ENCODE measurements at regions of chr20 and their contacts with region 1.

Region 1: DNA sequence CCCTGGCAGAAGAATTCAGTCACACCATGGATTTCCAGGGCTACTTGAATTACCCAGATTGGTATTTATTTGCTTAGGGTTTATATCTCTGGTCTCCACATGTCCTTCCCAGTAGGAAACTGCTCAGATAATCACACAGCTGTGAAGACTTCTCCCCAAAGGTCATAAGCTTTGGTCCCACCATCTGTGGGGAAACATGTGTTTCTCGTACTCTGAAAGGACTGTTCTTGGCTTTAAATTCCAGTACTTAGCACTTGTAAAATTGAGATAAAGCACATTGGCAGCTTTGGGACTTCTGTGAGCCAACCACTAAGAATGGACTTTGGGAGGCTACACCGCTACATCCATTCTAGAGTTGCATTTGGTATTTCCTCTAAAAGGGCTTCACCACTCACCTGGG is 205.3 kb upstream of the FOXA2 start:
- DNase-seq: no peak
- H3K4me3 Mint-ChIP-seq: no peak overlapping the region
- H3K27ac Mint-ChIP-seq: no peak overlapping the region
- H3K4me1 Mint-ChIP-seq: no peaks in the 10 kb centered on the region
- H3K27me3 Mint-ChIP-seq: no peaks in the 10 kb centered on the region

Region 2: DNA sequence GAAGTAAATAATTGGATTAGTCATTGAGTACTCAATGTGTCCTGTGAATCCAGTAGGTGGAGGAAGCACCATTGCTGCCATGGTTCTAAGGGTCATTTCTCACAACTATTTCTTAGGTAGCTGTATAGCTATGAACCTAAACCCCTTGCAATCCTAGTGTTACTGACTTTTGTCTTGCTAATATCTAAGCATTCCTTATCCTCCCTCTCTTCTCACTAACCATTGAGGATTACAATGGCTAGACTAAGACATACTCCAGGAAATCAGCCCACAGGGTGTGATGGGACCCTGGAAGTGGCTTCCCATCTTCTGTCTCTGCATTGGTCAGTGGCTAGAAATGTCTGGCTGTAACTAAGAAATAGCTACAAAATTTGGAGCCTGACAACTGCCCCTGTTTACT is 178.0 kb before region 1 on chr20:
- intact Hi-C with region 1: no loop called
- DNase-seq: no peak
- H3K4me3 Mint-ChIP-seq: no peak overlapping the region
- H3K27ac Mint-ChIP-seq: no peak overlapping the region
- H3K4me1 Mint-ChIP-seq: no peaks in the 10 kb centered on the region
- H3K27me3 Mint-ChIP-seq: no peaks in the 10 kb centered on the region

Region 3: GRCh38 chr20:22841846-22842245 is 52.2 kb after region 1 on chr20:
- intact Hi-C with region 1: loop called (anchors 2 kb)
- DNase-seq: no peak
- H3K4me3 Mint-ChIP-seq: no peak overlapping the region
- H3K27ac Mint-ChIP-seq: no peak overlapping the region
- H3K4me1 Mint-ChIP-seq: no peaks in the 10 kb centered on the region
- H3K27me3 Mint-ChIP-seq: peaks cover 2% of the 10 kb centered on the region

Measured in activated T-helper 1 cell treated with anti-CD3 and anti-CD28 coated beads, Interleukin-12 subunit alpha, Interleukin-12 subunit beta, Interleukin-2, Interleukin-4 antibody, amounts not matched to agents 30 ng/mL and 10 ng/mL and 1 ng/mL, durations not matched to agents 14 hours and 24 hours and 36 hours (primary cell).